Common myeloid progenitor, CD34-positive (primary cell): ENCODE measurements at regions of chr1 and their contacts with region 1.

Region 1: GRCh38 chr1:9069326-9070100 is at the start of gene SLC2A5:
- DNase-seq: peak; percentile 70 to 87 (median 83)
- H3K4me3 ChIP-seq: peak within 1 kb of the TSS in 6 of 7 experiments; percentile 49 to 60 (median 53)
- H3K27ac ChIP-seq: peak within 1 kb of the TSS; percentile 19 to 56
- H3K4me1 ChIP-seq: peaks cover 22 to 77% (median 67%) of the 10 kb centered on the region in 4 experiments
- H3K27me3 ChIP-seq: no peaks in the 10 kb centered on the region

Region 2: DNA sequence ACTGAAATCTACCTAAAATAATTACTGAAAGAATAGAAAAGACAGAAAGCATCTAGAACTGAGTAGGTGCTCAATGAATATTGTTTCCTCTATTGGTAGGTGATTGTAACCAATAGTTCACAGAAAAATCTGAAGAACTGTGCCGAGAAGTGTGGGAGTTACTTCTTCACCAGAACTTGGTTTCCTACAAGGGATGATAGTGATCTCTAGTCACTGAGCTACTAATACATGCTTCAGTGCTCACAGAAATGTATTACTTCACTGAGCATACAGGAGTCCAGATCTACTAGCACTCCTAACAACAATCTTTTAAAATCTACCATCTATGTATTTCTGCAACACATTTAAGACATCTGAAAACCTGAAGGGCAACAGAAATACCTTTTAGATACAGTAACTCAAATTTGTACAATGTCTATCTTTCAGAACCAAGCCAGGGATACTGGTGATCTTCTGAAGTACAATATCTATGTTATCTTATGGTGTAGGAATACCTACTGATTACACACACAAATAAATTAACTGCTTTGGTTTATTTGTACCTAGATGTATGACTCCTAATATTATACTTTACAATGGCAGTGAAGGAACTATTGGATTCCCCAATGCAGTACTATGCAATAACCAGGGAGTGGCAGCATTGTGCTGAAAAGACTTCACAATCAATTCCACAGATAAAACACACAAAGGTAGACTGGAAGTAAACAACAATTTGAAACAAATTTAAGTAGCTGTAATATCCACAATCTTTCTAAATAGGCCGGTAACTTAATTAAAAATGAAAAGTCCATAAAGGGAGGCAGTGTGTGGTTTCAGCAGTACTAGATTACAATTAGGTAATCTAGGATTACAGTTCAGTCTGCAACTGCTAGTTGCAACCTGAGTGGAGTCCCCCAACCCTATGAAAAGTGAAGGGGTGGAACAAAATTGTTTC is 508.6 kb before region 1 on chr1:
- CTCF ChIA-PET with region 1: no interaction called
- POLR2A ChIA-PET with region 1: no interaction called
- DNase-seq: peak; percentile 58 to 73 (median 71)
- H3K4me3 ChIP-seq: no peak overlapping the region
- H3K27ac ChIP-seq: peak overlapping the region in 1 of 2 experiments; percentile 32
- H3K4me1 ChIP-seq: peaks cover 4 to 24% (median 7%) of the 10 kb centered on the region in 4 experiments
- H3K27me3 ChIP-seq: no peaks in the 10 kb centered on the region

Region 3: GRCh38 chr1:9084906-9085305 is 15.4 kb after region 1 on chr1:
- CTCF ChIA-PET with region 1: interaction called, 16 read pairs
- POLR2A ChIA-PET with region 1: interaction called, 3 read pairs
- DNase-seq: peak in 2 of 3 donors; percentile 48 to 57
- H3K4me3 ChIP-seq: no peak overlapping the region
- H3K27ac ChIP-seq: peak overlapping the region in 1 of 2 experiments; percentile 36
- H3K4me1 ChIP-seq: peaks cover 23 to 59% (median 46%) of the 10 kb centered on the region in 4 experiments
- H3K27me3 ChIP-seq: no peaks in the 10 kb centered on the region

Region 4: DNA sequence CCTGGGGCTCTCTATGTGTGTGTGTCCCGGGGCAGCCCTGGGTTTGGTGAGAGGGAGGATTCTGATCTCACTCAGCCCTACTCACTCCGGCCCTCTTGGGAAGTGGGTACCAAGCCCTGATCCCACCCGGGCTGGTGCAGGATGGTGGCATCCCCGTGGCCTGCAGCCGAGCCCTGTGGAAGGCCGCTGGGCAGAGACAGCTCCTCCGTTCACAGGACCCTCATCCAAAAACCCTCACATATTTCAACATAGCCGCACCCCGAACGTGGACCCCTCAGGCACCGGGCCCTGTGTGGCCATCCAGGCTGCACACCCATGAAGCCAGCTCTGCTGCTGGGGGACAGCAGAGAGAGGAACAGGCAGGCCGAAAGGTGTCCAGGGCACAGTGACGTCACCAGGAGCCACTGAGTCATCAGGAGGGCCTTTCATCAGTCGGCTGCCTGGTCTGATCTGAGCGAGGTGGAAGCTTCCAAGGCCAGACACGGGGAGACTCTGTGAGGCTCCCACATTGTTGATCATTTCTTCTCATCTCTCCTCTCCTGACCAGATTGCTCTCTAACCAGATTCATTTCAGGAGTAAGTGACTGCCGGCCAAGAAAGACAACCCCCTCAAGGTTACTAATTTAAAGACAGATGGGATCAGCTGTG is 75.6 kb after region 1 on chr1:
- CTCF ChIA-PET with region 1: no interaction called
- POLR2A ChIA-PET with region 1: no interaction called
- DNase-seq: no peak
- H3K4me3 ChIP-seq: no peak overlapping the region
- H3K27ac ChIP-seq: no peak overlapping the region
- H3K4me1 ChIP-seq: peaks cover 0 to 9% (median 2%) of the 10 kb centered on the region in 4 experiments
- H3K27me3 ChIP-seq: peaks cover 0 to 2% (median 0%) of the 10 kb centered on the region in 5 experiments